Mammary epithelial cell (primary cell): ENCODE measurements at regions of chr5 and their contacts with region 1.

Region 1: GRCh38 chr5:179294891-179295772 is 50.1 kb downstream of the ADAMTS2 start:
- DNase-seq: no peak
- H3K4me3 ChIP-seq: no peak overlapping the region
- H3K27ac ChIP-seq: no peak overlapping the region
- H3K4me1 ChIP-seq: no peaks in the 10 kb centered on the region
- H3K27me3 ChIP-seq: no peaks in the 10 kb centered on the region
- CTCF ChIP-seq: no peak

Region 2: DNA sequence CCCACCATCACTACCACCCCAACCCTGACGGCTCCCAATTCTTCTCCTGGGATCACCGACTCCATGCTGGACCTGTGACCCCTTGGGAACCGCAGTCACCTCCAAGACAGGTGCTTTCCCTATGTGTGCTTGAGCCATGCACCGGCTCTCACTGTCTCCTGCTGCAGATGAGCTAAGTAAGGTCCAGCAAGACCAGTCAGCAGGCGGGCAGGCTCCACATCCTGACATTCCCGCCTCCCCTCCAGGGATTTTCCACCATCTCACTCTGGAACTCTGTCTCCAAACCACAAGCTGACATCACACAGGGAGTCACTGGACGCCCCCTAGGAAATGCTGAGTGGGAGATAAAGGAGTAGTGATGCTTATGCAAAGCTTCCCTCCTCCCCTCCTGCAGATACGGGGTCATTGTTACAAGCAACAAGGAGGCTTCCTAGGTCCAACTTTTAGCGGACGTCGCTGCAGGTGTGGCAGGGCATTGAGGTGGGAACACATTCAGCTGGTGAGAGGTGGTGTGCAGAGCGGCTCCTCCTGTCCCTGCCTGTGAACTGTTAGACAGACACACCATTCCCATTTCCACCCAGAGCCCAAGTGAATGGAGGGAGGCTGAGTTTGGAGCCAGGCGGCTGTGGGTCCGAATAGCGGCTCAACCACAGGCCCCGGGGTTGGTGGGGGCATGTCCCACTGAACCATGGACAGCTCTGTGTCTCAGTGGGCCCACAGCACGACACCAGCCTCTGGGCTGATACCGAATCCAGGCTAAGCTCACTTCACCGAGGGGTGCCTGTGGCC is 933.3 kb before region 1 on chr5:
- CTCF ChIA-PET with region 1: no interaction called
- dilution Hi-C with region 1: loop called (anchors 10 kb)
- in situ Hi-C with region 1: no loop called
- intact Hi-C with region 1: no loop called
- DNase-seq: no peak
- H3K4me3 ChIP-seq: no peak overlapping the region
- H3K27ac ChIP-seq: no peak overlapping the region
- H3K4me1 ChIP-seq: no peaks in the 10 kb centered on the region
- H3K27me3 ChIP-seq: no peaks in the 10 kb centered on the region
- CTCF ChIP-seq: no peak

Region 3: DNA sequence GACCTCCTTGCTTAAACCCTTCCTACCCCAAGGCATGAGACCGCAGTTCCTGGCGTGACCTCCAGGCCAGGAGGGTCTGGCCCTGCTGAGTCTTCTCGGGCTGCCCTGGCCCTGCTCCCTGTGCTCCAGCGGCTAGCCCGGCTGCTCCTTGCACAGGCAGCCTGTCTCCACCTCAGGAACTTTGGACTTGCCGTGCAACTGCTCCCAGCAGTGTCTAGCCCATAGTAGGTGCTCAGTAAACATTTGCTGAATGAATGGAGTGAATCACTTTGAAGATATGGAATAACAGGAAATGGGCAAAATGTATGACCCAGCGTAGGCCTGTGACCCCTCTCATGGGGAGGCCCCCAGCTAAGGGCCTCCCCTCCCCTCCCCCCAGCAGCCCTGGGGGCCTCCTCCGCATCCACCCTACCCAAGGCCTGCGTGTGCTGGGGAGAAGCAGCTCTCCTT is 107.9 kb before region 1 on chr5:
- CTCF ChIA-PET with region 1: no interaction called
- dilution Hi-C with region 1: loop called (anchors 10 kb)
- in situ Hi-C with region 1: no loop called
- intact Hi-C with region 1: no loop called
- DNase-seq: no peak
- H3K4me3 ChIP-seq: no peak overlapping the region
- H3K27ac ChIP-seq: no peak overlapping the region
- H3K4me1 ChIP-seq: no peaks in the 10 kb centered on the region
- H3K27me3 ChIP-seq: no peaks in the 10 kb centered on the region
- CTCF ChIP-seq: no peak

Region 4: GRCh38 chr5:179378441-179379271 is 83.5 kb after region 1 on chr5:
- CTCF ChIA-PET with region 1: no interaction called
- dilution Hi-C with region 1: loop called (anchors 5 kb)
- in situ Hi-C with region 1: no loop called
- intact Hi-C with region 1: no loop called
- DNase-seq: no peak
- H3K4me3 ChIP-seq: no peak overlapping the region
- H3K27ac ChIP-seq: no peak overlapping the region
- H3K4me1 ChIP-seq: no peaks in the 10 kb centered on the region
- H3K27me3 ChIP-seq: no peaks in the 10 kb centered on the region
- CTCF ChIP-seq: no peak

Region 5: DNA sequence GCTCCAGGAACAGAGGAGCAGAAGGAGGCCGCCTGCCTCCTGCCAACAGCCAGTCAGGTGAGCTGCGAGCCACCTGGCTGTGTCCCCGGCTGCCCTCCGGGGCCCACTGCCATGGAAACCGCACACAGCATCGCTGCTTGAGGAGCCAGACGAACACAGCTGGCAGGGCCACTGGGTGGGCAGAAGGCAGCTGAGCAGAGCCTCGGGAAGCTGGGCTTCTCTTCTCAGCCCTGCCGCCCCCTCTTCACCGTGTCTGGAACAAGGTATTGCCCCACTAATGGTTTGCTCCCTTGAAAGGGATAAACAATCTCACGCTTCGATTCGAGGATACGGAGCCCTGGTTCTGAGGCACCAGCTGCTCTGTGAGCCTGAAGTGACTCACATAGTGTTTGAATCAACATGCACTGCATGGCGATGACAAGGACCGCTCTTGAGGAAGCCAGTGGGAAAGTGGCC is 191.5 kb after region 1 on chr5:
- CTCF ChIA-PET with region 1: no interaction called
- dilution Hi-C with region 1: loop called (anchors 10 kb)
- in situ Hi-C with region 1: no loop called
- intact Hi-C with region 1: no loop called
- DNase-seq: no peak
- H3K4me3 ChIP-seq: no peak overlapping the region
- H3K27ac ChIP-seq: no peak overlapping the region
- H3K4me1 ChIP-seq: no peaks in the 10 kb centered on the region
- H3K27me3 ChIP-seq: peaks cover 3% of the 10 kb centered on the region
- CTCF ChIP-seq: no peak

Region 6: GRCh38 chr5:179643556-179643955 is 348.4 kb after region 1 on chr5:
- CTCF ChIA-PET with region 1: no interaction called
- dilution Hi-C with region 1: no loop called
- in situ Hi-C with region 1: no loop called
- intact Hi-C with region 1: no loop called
- DNase-seq: no peak
- H3K4me3 ChIP-seq: no peak overlapping the region
- H3K27ac ChIP-seq: no peak overlapping the region
- H3K4me1 ChIP-seq: no peaks in the 10 kb centered on the region
- H3K27me3 ChIP-seq: no peaks in the 10 kb centered on the region
- CTCF ChIP-seq: no peak